H1 (cell line): ENCODE measurements at regions of chr4 and their contacts with region 1.

Region 1: DNA sequence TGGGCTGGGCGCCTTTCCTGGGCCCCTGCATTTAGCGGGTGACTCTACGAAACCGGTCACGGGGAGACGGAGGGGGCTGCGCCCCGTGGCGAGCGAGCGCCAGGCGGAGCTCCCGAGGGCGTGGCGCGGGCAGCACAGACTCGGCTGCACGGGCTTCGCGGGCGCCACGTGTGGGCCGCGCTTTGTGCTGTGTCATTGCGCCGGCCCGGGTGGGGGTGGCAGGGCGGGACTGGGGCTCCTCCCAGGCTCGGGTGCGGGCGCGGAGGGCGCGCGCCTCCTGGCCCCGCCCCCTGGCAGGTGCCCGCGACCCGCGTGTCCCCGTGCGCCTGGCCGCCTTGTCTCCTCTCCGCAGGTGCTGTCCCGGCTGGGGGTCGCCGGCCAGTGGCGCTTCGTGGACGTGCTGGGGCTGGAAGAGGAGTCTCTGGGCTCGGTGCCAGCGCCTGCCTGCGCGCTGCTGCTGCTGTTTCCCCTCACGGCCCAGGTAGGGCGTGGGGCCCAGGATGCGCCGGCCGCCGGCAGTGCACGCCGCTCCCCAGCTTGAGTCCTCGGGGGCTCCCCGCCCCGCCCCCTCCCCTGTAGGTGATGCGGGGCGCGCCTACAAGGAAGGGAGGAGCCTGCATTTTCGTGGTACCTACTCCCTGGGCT is 651 bp downstream of the UCHL1 start:
- DNase-seq: peak in 1 of 2 experiments; percentile 73
- H3K4me3 ChIP-seq: peak overlapping the region; percentile 87 to 97 (median 92)
- H3K27ac ChIP-seq: peak overlapping the region; percentile 89; the same call in 1 of the 2 replicates
- H3K4me1 ChIP-seq: peaks cover 2 to 8% (median 4%) of the 10 kb centered on the region in 4 experiments; a peak in 6 of 7 replicates
- H3K27me3 ChIP-seq: no peaks in the 10 kb centered on the region
- CTCF ChIP-seq: no peak
- EP300 ChIP-seq: no peak
- POLR2A ChIP-seq: peak; percentile 42 to 49; a peak in 1 of 3 replicates
- RAD21 ChIP-seq: no peak

Region 2: DNA sequence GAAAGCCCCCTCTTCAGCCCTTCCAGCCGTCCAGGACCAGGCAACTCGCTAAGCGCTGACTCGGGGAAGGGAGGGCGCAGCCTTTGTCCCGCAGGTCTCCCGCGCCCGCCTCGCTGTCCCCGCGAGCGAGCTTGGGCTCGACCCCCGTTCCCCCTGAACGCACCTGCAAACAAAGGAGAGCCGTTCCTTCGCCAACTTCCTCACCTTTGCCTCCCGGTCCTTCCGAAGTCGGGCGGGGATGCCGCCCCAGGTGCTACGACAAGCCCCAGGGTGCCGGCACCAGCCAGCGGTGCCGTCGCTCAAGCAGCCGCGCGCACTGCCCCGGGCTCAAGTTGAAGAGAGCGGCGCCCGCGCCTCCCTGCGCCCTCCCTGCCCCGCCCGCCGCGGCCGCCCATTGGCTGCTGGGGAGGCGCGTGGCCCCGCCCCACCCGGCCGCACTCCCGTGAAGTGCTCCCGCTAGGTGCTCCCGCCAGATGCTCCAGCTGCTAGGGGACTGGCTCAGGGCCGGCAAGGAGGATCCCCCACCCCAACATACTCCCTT is 400.5 kb before region 1 on chr4:
- CTCF ChIA-PET with region 1: no interaction called
- POLR2A ChIA-PET with region 1: interaction called, 12 read pairs
- DNase-seq: peak; percentile 63 to 90
- H3K4me3 ChIP-seq: peak overlapping the region; percentile 84 to 98 (median 90)
- H3K27ac ChIP-seq: peak overlapping the region; percentile 86
- H3K4me1 ChIP-seq: peaks cover 0 to 3% (median 1%) of the 10 kb centered on the region in 4 experiments; a peak in 2 of 7 replicates
- H3K27me3 ChIP-seq: no peaks in the 10 kb centered on the region
- CTCF ChIP-seq: no peak
- EP300 ChIP-seq: no peak
- POLR2A ChIP-seq: peak; percentile 94 to 98
- RAD21 ChIP-seq: no peak

Region 3: DNA sequence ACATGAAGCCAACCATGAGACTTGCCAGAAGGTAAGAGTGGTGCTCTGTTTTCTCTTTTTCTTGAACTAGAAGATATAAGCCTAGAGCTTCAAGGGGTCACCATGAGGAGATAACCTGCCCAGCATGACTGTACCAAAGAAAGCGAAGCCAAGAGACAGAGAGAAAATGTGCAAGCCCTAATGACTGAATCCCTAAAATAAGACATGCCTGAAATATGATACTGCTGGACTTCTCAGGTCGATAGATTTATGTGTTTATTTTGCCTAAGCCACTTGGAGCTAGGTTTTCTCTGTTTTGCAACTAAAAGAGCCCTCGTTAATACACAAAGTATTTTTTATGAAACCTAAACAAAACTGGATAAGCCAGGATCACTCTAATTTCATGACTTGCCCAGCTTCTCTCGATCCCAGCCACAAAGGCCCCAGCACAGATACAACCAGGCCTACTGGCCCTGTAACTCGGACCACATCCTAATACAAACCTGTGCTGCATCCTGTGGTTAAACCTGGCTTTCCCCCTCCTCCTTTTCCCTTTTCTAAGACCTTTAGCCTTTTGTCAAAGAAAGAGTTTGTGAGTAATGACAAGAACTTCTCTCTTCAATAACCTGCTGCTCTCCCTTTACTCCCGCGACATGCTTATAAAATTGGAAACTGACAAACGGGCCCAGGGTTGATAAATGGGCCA is 228.8 kb before region 1 on chr4:
- CTCF ChIA-PET with region 1: no interaction called
- POLR2A ChIA-PET with region 1: no interaction called
- DNase-seq: no peak
- H3K4me3 ChIP-seq: no peak overlapping the region
- H3K27ac ChIP-seq: no peak overlapping the region
- H3K4me1 ChIP-seq: no peaks in the 10 kb centered on the region
- H3K27me3 ChIP-seq: no peaks in the 10 kb centered on the region
- CTCF ChIP-seq: no peak
- EP300 ChIP-seq: no peak
- POLR2A ChIP-seq: no peak
- RAD21 ChIP-seq: no peak

Region 4: GRCh38 chr4:41214136-41214824 is 43.1 kb before region 1 on chr4 and contains the start of gene APBB2:
- CTCF ChIA-PET with region 1: interaction called, 5 read pairs
- POLR2A ChIA-PET with region 1: interaction called, 86 read pairs
- DNase-seq: peak; percentile 94 to 95
- H3K4me3 ChIP-seq: peak within 1 kb of the TSS; percentile 55 to 88 (median 85)
- H3K27ac ChIP-seq: 0 out of 2 replicates have a peak within 1 kb of the TSS, but pooled peaks have one; percentile 48
- H3K4me1 ChIP-seq: peaks cover 3 to 12% (median 6%) of the 10 kb centered on the region in 4 experiments; a peak in 6 of 7 replicates
- H3K27me3 ChIP-seq: no peaks in the 10 kb centered on the region; a peak in 1 of 7 replicates
- CTCF ChIP-seq: peak; percentile 67 to 93 (median 70)
- EP300 ChIP-seq: no peak
- POLR2A ChIP-seq: peak in 1 of 2 experiments; percentile 83; a peak in 2 of 3 replicates
- RAD21 ChIP-seq: peak; percentile 74 to 75
- total RNA-seq, gene APBB2: 59.4 and 64.0 TPM in 2 replicates

Region 5: GRCh38 chr4:41232406-41232805 is 25.0 kb before region 1 on chr4:
- CTCF ChIA-PET with region 1: interaction called, 4 read pairs
- POLR2A ChIA-PET with region 1: interaction called, 27 read pairs
- DNase-seq: peak in 1 of 2 experiments; percentile 40
- H3K4me3 ChIP-seq: no peak overlapping the region
- H3K27ac ChIP-seq: no peak overlapping the region
- H3K4me1 ChIP-seq: no peaks in the 10 kb centered on the region
- H3K27me3 ChIP-seq: no peaks in the 10 kb centered on the region
- CTCF ChIP-seq: peak in 2 of 3 experiments; percentile 35 to 37; a peak in 3 of 4 replicates
- EP300 ChIP-seq: no peak
- POLR2A ChIP-seq: no peak
- RAD21 ChIP-seq: peak; percentile 51 to 68

Region 6: DNA sequence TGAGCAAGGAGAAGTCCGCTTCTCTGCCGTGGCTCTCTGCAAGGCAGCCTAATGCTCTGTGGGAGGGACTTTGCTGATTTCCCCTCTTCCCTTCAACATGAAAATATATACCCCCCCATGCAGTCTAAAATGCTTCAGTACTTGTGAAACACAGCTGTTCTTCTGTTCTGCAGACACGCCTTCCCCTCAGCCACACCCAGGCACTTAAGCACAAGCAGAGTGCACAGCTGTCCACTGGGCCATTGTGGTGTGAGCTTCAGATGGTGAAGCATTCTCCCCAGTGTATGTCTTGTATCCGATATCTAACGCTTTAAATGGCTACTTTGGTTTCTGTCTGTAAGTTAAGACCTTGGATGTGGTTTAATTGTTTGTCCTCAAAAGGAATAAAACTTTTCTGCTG is 10.6 kb after region 1 on chr4:
- CTCF ChIA-PET with region 1: interaction called, 6 read pairs
- POLR2A ChIA-PET with region 1: interaction called, 150 read pairs
- DNase-seq: no peak
- H3K4me3 ChIP-seq: no peak overlapping the region
- H3K27ac ChIP-seq: 0 out of 2 replicates have a peak overlapping the region, but pooled peaks have one; percentile 19
- H3K4me1 ChIP-seq: no peaks in the 10 kb centered on the region
- H3K27me3 ChIP-seq: no peaks in the 10 kb centered on the region
- CTCF ChIP-seq: no peak
- EP300 ChIP-seq: no peak
- POLR2A ChIP-seq: 0 out of 3 replicates have a peak, but pooled peaks of 1 of the 2 experiments have one; percentile 32
- RAD21 ChIP-seq: no peak

Region 7: GRCh38 chr4:41339812-41340809 is 82.7 kb after region 1 on chr4:
- CTCF ChIA-PET with region 1: interaction called, 3 read pairs
- POLR2A ChIA-PET with region 1: interaction called, 10 read pairs
- DNase-seq: no peak
- H3K4me3 ChIP-seq: no peak overlapping the region
- H3K27ac ChIP-seq: no peak overlapping the region
- H3K4me1 ChIP-seq: peaks cover 0 to 3% (median 0%) of the 10 kb centered on the region in 4 experiments; a peak in 4 of 7 replicates
- H3K27me3 ChIP-seq: no peaks in the 10 kb centered on the region
- CTCF ChIP-seq: no peak
- EP300 ChIP-seq: no peak
- POLR2A ChIP-seq: no peak
- RAD21 ChIP-seq: peak in 1 of 2 experiments; percentile 28; a peak in 2 of 4 replicates